ENCODE measurements at regions of chr11 and their contacts with region 1.

Region 1: GRCh38 chr11:3057069-3057963 is at the start of gene CARS1:
- DNase-seq: peak; percentile 94
- ATAC-seq: peak; percentile 96
- H3K4me3 ChIP-seq: peak within 1 kb of the TSS; percentile 22 to 97 (median 87)
- H3K4me3 Mint-ChIP-seq: peak within 1 kb of the TSS; percentile 93
- H3K27ac ChIP-seq: peak within 1 kb of the TSS; percentile 43 to 94
- H3K27ac Mint-ChIP-seq: peak within 1 kb of the TSS; percentile 83
- H3K4me1 ChIP-seq: peaks cover 15 to 20% of the 10 kb centered on the region in 2 donors
- H3K4me1 Mint-ChIP-seq: peaks cover 35% of the 10 kb centered on the region
- H3K27me3 ChIP-seq: no peaks in the 10 kb centered on the region
- H3K27me3 Mint-ChIP-seq: no peaks in the 10 kb centered on the region
- CTCF ChIP-seq: no peak
- total RNA-seq, gene CARS1: 49.5 and 56.7 TPM in 2 replicates

Region 2: GRCh38 chr11:2901854-2902783 is 155.2 kb before region 1 on chr11:
- CTCF ChIA-PET with region 1: no interaction called
- POLR2A ChIA-PET with region 1: no interaction called
- intact Hi-C with region 1: loop called (anchors 10 kb)
- DNase-seq: peak; percentile 88
- ATAC-seq: peak; percentile 97
- H3K4me3 ChIP-seq: peak overlapping the region; percentile 36 to 87 (median 66)
- H3K4me3 Mint-ChIP-seq: peak overlapping the region; percentile 85
- H3K27ac ChIP-seq: no peak overlapping the region
- H3K27ac Mint-ChIP-seq: peak overlapping the region; percentile 78
- H3K4me1 ChIP-seq: peaks cover 9 to 26% of the 10 kb centered on the region in 2 donors
- H3K4me1 Mint-ChIP-seq: peaks cover 20% of the 10 kb centered on the region
- H3K27me3 ChIP-seq: no peaks in the 10 kb centered on the region
- H3K27me3 Mint-ChIP-seq: peaks cover 5% of the 10 kb centered on the region
- CTCF ChIP-seq: no peak

Region 3: GRCh38 chr11:3177931-3178330 is 120.6 kb after region 1 on chr11:
- CTCF ChIA-PET with region 1: no interaction called
- POLR2A ChIA-PET with region 1: no interaction called
- intact Hi-C with region 1: no loop called
- DNase-seq: no peak
- ATAC-seq: no peak
- H3K4me3 ChIP-seq: no peak overlapping the region
- H3K4me3 Mint-ChIP-seq: no peak overlapping the region
- H3K27ac ChIP-seq: no peak overlapping the region
- H3K27ac Mint-ChIP-seq: no peak overlapping the region
- H3K4me1 ChIP-seq: no peaks in the 10 kb centered on the region
- H3K4me1 Mint-ChIP-seq: no peaks in the 10 kb centered on the region
- H3K27me3 ChIP-seq: peaks cover 0 to 3% (median 0%) of the 10 kb centered on the region in 4 experiments
- H3K27me3 Mint-ChIP-seq: peaks cover 13% of the 10 kb centered on the region
- CTCF ChIP-seq: no peak

Region 4: GRCh38 chr11:3378426-3379423 is 321.4 kb after region 1 on chr11 and contains the start of gene ZNF195:
- CTCF ChIA-PET with region 1: no interaction called
- POLR2A ChIA-PET with region 1: no interaction called
- intact Hi-C with region 1: loop called (anchors 1 kb)
- DNase-seq: peak; percentile 95
- ATAC-seq: peak; percentile 100
- H3K4me3 ChIP-seq: peak within 1 kb of the TSS; percentile 67 to 97 (median 87)
- H3K4me3 Mint-ChIP-seq: peak within 1 kb of the TSS; percentile 97
- H3K27ac ChIP-seq: peak within 1 kb of the TSS; percentile 63 to 92
- H3K27ac Mint-ChIP-seq: peak within 1 kb of the TSS; percentile 95
- H3K4me1 ChIP-seq: peaks cover 16 to 24% of the 10 kb centered on the region in 2 donors
- H3K4me1 Mint-ChIP-seq: peaks cover 39% of the 10 kb centered on the region
- H3K27me3 ChIP-seq: no peaks in the 10 kb centered on the region
- H3K27me3 Mint-ChIP-seq: no peaks in the 10 kb centered on the region
- CTCF ChIP-seq: no peak
- total RNA-seq, gene ZNF195: 46.0 and 47.3 TPM in 2 replicates

Measured in B cell (primary cell).